Activated CD4-positive, alpha-beta T cell treated with anti-CD3 and anti-CD28 coated beads for 36 hours (primary cell): ENCODE measurements at regions of chr21 and their contacts with region 1.

Region 1: DNA sequence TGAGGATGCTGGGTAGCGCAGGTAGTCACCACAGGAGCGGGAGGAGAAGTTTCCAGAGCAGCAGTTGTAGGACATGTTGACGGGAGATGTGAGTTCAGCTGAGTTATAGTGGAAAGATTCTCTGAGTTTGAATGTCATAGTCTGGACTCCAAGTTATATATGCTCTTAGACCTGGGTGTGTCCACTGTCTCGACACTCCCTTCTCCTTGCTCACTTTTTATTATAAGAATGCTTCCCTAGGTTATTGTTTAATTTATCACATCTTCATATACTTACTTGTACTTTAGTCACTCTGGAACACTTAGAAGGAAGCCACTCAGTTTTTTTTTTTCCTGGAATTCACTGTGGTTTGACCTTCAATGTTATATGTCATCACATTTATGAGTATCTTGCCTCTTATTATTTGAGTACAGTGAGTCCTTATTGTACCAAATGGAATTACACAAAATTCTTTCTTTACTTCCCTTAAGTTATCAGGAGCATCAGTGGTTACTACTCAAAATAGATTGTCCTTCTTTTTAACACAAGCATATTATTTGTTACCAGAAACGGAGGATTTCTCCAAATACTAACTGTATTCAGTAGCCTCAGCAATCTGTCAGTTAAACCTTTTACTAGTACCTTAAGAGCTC is at the start of gene KRTAP13-2:
- DNase-seq: no peak
- ATAC-seq: no peak
- H3K4me3 Mint-ChIP-seq: no peak within 1 kb of the TSS
- H3K27ac Mint-ChIP-seq: no peak within 1 kb of the TSS
- H3K4me1 Mint-ChIP-seq: no peaks in the 10 kb centered on the region
- H3K27me3 Mint-ChIP-seq: peaks cover 4% of the 10 kb centered on the region
- total RNA-seq, gene KRTAP13-2: not detected

Region 2: DNA sequence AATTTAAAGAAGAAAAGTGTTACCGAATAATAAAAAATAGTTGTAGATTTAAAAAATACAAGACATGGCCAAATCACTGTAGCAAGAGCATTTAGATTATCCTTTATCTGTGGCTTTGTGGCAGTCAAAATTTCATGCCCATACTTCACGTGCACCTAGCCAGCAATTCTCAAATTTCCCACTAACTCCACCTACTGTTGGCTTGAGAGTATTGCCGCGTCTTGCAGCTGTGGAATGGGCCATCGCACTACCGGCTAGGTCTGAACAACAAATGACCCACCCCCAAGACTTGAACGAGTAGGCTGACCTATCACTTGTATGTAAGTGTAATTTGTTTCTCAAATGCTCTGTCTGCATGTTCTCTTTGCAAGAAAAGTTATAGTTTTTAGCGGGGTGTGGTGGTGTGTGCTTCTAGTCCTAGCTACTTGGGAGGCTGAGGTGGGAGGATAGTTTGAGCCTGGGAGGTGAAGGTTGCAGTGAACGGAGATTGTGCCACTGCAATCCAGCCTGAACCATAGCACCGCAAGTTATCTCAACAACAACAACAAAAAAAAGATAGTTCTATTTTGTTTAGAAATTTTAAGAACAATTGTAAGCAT is 61.9 kb after region 1 on chr21:
- CTCF ChIA-PET with region 1: no interaction called
- POLR2A ChIA-PET with region 1: no interaction called
- intact Hi-C with region 1: loop called in 1 of 2 experiments (anchors 10 kb)
- DNase-seq: peak; percentile 43
- ATAC-seq: peak; percentile 49
- H3K4me3 Mint-ChIP-seq: no peak overlapping the region
- H3K27ac Mint-ChIP-seq: no peak overlapping the region
- H3K4me1 Mint-ChIP-seq: no peaks in the 10 kb centered on the region
- H3K27me3 Mint-ChIP-seq: peaks cover 15% of the 10 kb centered on the region